Activated naive CD4-positive, alpha-beta T cell treated with anti-CD3 and anti-CD28 coated beads for 36 hours (primary cell): ENCODE measurements at regions of chr19 and their contacts with region 1.

Region 1: DNA sequence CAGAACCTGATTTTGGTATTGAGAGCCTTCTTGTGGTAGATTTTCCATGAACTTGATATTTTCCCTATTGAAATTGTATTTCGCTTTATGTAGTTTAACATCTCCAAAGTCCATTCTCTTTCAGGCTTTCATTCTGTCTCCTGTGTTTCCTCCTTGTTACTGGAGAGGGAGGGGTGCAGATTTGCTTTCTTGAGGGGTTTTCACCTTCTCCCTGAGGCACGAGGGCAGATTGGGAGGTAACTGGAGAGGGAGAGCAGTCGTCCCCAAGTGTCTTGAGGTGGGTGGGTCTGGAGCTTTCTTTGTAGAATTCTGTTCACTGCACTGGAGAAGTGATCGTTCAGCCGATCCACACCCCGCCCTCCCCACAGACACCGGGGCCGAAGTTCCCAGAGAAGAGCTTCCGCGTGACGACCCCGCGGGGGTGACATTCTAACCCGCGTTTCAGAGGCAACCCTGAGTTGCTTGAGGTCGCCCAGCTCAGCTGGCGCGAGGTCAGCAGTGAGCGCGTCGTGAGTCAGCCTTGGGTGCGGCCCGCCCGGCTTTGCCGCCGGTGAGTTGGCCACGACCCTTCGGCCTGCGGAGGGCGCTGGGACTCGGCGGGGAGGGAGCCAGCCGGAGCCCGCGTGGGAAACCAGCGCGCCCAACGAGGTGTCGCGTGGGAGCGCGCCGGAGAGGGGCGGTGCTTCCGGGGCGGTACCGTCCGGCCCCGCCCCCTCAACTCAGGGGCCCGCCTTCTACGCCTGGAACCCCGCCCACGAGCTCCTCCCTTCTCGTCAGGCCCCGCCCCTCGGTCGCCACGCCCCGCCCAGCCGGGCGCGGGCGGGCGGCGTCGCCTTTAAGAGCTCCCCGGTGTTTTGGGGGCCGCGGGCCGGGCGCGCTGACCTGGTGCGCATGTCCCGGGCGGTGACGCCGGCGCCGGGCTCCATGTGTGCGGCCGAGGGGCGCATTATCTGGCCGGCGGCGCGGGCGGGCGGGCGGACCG is at the start of gene GATAD2A:
- DNase-seq: peak; percentile 88
- H3K4me3 Mint-ChIP-seq: peak within 1 kb of the TSS; percentile 86
- H3K27ac Mint-ChIP-seq: peak within 1 kb of the TSS; percentile 91
- H3K4me1 Mint-ChIP-seq: peaks cover 63% of the 10 kb centered on the region
- H3K27me3 Mint-ChIP-seq: no peaks in the 10 kb centered on the region
- total RNA-seq, gene GATAD2A: 91.2 to 100 TPM

Region 2: DNA sequence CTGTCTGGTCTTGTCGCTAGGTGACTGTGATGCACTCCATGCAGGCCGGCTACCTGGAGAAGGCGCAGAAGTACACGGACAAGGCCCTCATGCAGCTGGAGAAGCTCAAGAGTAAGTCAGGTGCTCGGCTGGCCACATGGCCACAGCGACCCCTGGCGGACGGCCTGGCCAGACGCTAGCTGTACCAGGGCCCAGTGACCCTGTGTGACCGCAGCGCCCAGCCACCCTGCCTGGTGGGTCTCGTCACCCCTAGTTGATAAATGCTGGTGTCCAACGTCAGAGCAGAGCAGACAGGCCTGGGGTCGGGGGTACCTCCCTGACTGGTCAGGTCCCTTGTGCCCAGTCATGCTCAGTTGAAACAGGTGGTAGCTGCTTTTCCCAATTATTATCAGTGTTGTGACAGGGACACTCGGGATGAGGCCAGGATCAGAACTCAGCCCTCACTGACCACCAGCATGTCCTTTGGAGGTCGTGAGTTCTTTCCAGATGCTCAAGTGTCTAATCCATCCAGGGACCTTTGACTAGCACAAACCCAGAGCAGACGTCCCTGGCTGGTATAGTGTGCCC is 62.3 kb before region 1 on chr19:
- CTCF ChIA-PET with region 1: no interaction called
- intact Hi-C with region 1: no loop called
- DNase-seq: no peak
- H3K4me3 Mint-ChIP-seq: no peak overlapping the region
- H3K27ac Mint-ChIP-seq: no peak overlapping the region
- H3K4me1 Mint-ChIP-seq: no peaks in the 10 kb centered on the region
- H3K27me3 Mint-ChIP-seq: no peaks in the 10 kb centered on the region

Region 3: GRCh38 chr19:19366612-19367396 is 38.4 kb before region 1 on chr19:
- CTCF ChIA-PET with region 1: interaction called, 6 read pairs
- intact Hi-C with region 1: loop called (anchors 1 kb)
- DNase-seq: peak; percentile 76
- H3K4me3 Mint-ChIP-seq: no peak overlapping the region
- H3K27ac Mint-ChIP-seq: peak overlapping the region; percentile 18
- H3K4me1 Mint-ChIP-seq: peaks cover 16% of the 10 kb centered on the region
- H3K27me3 Mint-ChIP-seq: no peaks in the 10 kb centered on the region